Kidney (tissue), 22 donors: ENCODE measurements at regions of chr1 and their contacts with region 1.

Region 1: DNA sequence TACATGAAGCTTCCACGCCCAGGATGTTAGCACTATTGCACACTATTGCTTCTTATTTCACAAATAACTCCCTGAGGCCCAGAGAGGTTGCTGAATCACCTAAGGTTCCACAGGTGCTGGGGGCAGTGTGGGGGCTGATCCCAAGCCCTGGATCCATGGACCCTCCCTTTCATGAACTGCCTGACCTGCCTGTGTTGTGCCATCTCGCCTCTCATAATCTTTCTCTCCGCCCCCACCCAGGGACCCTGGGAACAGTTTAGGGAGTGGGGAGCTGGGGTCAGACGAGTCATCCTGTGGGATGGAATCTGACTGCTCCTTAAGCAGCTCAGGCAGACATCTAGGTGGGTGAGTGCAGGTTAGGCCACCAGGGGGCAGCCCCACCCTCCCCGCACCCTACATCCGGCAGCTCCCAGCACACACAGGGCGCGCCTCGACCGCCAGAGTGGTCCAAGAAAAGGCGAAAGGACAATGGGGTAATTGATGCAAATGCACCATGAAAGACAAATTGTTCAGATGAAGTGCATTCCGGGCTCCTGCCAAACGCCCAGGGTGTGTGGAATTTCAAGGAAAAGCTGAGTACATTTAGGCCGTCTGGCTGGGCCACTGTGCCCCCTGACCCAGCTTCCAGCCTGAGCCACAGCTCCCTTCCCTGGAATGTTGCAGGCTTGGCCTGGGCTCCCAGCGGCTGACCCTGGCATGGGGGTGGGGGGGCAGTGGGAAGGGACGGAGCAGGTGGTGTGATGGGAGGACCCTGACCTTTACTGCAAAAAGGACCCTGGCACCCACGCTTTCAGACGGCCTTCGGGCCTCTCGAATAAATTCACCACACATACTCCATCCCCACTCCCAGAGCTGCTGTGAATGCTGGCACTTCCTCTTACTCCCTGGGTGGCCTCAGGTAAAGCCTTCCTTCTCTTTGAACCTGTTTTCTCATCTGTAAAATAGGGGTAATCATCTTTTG is 20.8 kb downstream of the PHLDA3 start:
- DNase-seq: peak; percentile 77 to 88 (median 81)
- H3K4me3 ChIP-seq: no peak overlapping the region
- H3K27ac ChIP-seq: no peak overlapping the region
- H3K4me1 ChIP-seq: peaks cover 0 to 3% (median 2%) of the 10 kb centered on the region in 3 donors
- H3K27me3 ChIP-seq: no peaks in the 10 kb centered on the region
- CTCF ChIP-seq: peak; percentile 70

Region 2: DNA sequence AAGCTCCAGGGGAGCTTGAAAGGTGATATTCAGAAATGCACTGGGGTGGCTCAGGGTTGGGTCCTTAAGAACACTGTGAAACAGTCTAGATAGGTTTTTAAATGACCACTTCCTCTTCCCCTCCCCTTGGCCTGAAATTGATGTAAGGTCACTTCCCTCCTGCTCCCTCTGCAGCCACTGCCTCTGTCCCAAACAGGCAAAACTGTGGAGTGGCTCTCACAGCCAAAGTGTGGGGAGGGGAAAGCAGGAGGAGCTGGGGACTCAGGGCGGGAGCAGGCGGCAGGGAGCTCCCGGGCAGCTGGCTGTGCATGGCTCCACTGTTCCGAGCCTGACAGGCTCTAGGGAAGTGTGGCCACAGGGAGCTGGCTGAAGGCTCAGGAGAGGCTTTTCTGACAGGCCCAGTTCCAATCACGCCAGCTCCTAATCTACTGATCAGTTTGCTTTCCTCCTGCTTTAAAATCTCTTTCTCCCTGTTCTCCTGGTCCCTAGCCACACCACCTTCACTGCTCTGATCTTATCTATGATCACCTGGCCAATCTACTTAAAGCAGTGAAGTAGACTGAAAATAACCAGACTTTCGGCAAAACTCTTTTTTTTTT is 63.8 kb after region 1 on chr1:
- intact Hi-C with region 1: loop called (anchors 10 kb)
- DNase-seq: peak; percentile 60 to 91 (median 75)
- H3K4me3 ChIP-seq: no peak overlapping the region
- H3K27ac ChIP-seq: peak overlapping the region; percentile 26 to 73
- H3K4me1 ChIP-seq: peaks cover 3 to 21% (median 18%) of the 10 kb centered on the region in 3 donors
- H3K27me3 ChIP-seq: no peaks in the 10 kb centered on the region
- CTCF ChIP-seq: no peak